Ascending aorta (tissue), 2 donors: ENCODE measurements at regions of chr10 and their contacts with region 1.

Region 1: GRCh38 chr10:99845837-99846382 is 63.5 kb downstream of the ABCC2 start:
- DNase-seq: peak in 1 of 2 donors; percentile 93
- H3K4me3 ChIP-seq: peak overlapping the region; percentile 47 to 57
- H3K27ac ChIP-seq: no peak overlapping the region
- H3K4me1 ChIP-seq: peaks cover 0 to 5% of the 10 kb centered on the region in 2 donors
- H3K27me3 ChIP-seq: no peaks in the 10 kb centered on the region
- CTCF ChIP-seq: peak; percentile 88 to 95 (median 89)

Region 2: DNA sequence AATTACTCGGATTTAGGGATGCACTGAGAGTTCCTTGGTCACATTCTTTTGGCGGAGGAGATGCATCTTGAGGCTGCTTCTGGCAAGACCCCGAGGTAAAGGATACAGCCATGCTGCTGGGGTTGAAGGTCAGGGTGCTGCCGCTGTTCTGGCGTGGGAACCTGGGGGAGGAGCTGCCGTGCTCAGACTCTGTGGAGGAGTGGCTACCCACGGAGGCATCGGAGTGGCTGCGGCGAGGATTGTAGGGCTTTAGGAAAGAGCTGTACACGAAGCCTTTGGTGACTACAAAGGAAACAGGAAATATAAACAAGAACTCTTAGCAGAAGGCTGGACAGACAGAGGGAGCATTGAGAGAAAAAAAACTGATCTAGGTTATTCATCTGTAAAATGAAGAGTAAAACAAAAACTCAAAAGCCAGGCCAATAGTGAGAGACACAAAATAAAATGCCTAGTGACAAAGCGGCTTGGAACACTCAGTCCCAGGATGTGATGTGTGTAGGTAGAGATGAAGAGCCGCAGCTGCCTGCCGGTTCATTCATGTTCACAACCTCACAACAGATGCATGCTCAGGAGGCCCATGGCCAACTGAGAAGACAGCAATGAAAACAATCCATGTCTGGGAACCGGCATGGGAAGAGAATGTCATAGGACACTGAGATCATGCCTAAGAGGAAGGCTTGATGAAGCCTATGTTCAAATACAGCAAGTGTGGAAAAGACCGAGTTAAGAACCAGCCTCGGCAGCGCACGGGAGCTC is 34.3 kb after region 1 on chr10:
- intact Hi-C with region 1: loop called (anchors 1 kb)
- DNase-seq: no peak
- H3K4me3 ChIP-seq: no peak overlapping the region
- H3K27ac ChIP-seq: no peak overlapping the region
- H3K4me1 ChIP-seq: no peaks in the 10 kb centered on the region
- H3K27me3 ChIP-seq: no peaks in the 10 kb centered on the region
- CTCF ChIP-seq: no peak

Region 3: GRCh38 chr10:100009793-100010676 is 164.1 kb after region 1 on chr10 and contains the start of gene DNMBP:
- intact Hi-C with region 1: loop called (anchors 1 kb)
- DNase-seq: peak; percentile 14 to 89
- H3K4me3 ChIP-seq: peak within 1 kb of the TSS; percentile 78 to 98
- H3K27ac ChIP-seq: peak within 1 kb of the TSS; percentile 65 to 80
- H3K4me1 ChIP-seq: peaks cover 3 to 19% of the 10 kb centered on the region in 2 donors
- H3K27me3 ChIP-seq: no peaks in the 10 kb centered on the region
- CTCF ChIP-seq: peak; percentile 35 to 85 (median 49)
- total RNA-seq, gene DNMBP: 15.9 TPM

Region 4: GRCh38 chr10:100046021-100046486 is 200.1 kb after region 1 on chr10:
- intact Hi-C with region 1: loop called (anchors 1 kb)
- DNase-seq: peak in 1 of 2 donors; percentile 92
- H3K4me3 ChIP-seq: no peak overlapping the region
- H3K27ac ChIP-seq: no peak overlapping the region
- H3K4me1 ChIP-seq: no peaks in the 10 kb centered on the region
- H3K27me3 ChIP-seq: no peaks in the 10 kb centered on the region
- CTCF ChIP-seq: peak; percentile 70 to 92 (median 86)

Region 5: GRCh38 chr10:100529475-100530298 is 683.8 kb after region 1 on chr10 and contains the start of gene NDUFB8:
- intact Hi-C with region 1: loop called (anchors 10 kb)
- DNase-seq: peak; percentile 62 to 94
- H3K4me3 ChIP-seq: peak within 1 kb of the TSS; percentile 87 to 91
- H3K27ac ChIP-seq: peak within 1 kb of the TSS; percentile 71 to 84
- H3K4me1 ChIP-seq: peaks cover 2 to 7% of the 10 kb centered on the region in 2 donors
- H3K27me3 ChIP-seq: no peaks in the 10 kb centered on the region
- CTCF ChIP-seq: no peak
- total RNA-seq, gene NDUFB8: 71.1 TPM